ENCODE measurements at regions of chr11 and their contacts with region 1.

Region 1: GRCh38 chr11:131253656-131254151 is 116.7 kb upstream of the NTM start:
- DNase-seq: peak in 1 of 2 experiments; percentile 23
- H3K4me3 ChIP-seq: no peak overlapping the region
- H3K4me3 Mint-ChIP-seq: no peak overlapping the region
- H3K27ac Mint-ChIP-seq: no peak overlapping the region
- H3K4me1 ChIP-seq: peaks cover 9% of the 10 kb centered on the region; the same call in 1 of the 2 replicates
- H3K4me1 Mint-ChIP-seq: no peaks in the 10 kb centered on the region
- H3K27me3 ChIP-seq: no peaks in the 10 kb centered on the region
- H3K27me3 Mint-ChIP-seq: peaks cover 37% of the 10 kb centered on the region
- CTCF ChIP-seq: no peak

Region 2: DNA sequence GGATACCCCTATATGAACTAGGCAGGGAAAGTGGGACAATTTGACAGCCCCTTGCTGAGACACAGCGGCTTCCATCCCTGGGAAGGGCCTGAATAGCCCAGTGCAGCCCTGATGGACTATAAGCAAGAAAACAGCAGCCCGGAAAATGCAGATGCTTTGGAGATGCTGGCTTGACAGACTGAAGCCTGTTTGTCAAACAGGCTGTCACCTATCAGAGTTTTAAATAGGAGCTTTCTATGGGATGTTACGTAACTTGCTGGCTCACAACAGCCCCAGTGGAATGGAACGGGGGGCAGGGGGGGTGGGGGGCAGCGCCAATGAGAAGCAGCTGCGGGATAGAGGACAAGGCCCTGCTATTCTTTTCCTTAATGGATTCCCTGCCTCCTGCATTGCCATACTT is 24.8 kb after region 1 on chr11:
- CTCF ChIA-PET with region 1: no interaction called
- POLR2A ChIA-PET with region 1: no interaction called
- intact Hi-C with region 1: loop called (anchors 1 kb)
- DNase-seq: no peak
- H3K4me3 ChIP-seq: no peak overlapping the region
- H3K4me3 Mint-ChIP-seq: no peak overlapping the region
- H3K27ac Mint-ChIP-seq: no peak overlapping the region
- H3K4me1 ChIP-seq: no peaks in the 10 kb centered on the region
- H3K4me1 Mint-ChIP-seq: no peaks in the 10 kb centered on the region
- H3K27me3 ChIP-seq: no peaks in the 10 kb centered on the region
- H3K27me3 Mint-ChIP-seq: peaks cover 14% of the 10 kb centered on the region
- CTCF ChIP-seq: no peak